MCF 10A (cell line): ENCODE measurements at regions of chr2 and their contacts with region 1.

Region 1: GRCh38 chr2:41853427-41854216 is 194.2 kb upstream of the PKDCC start:
- DNase-seq: peak; percentile 59
- H3K4me3 Mint-ChIP-seq: no peak overlapping the region
- H3K27ac Mint-ChIP-seq: no peak overlapping the region
- H3K4me1 Mint-ChIP-seq: peaks cover 2% of the 10 kb centered on the region
- H3K27me3 Mint-ChIP-seq: peaks cover 15% of the 10 kb centered on the region
- CTCF ChIP-seq: peak; percentile 67

Region 2: GRCh38 chr2:41775366-41776032 is 78.1 kb before region 1 on chr2:
- CTCF ChIA-PET with region 1: no interaction called
- POLR2A ChIA-PET with region 1: no interaction called
- intact Hi-C with region 1: no loop called
- DNase-seq: no peak
- H3K4me3 Mint-ChIP-seq: no peak overlapping the region
- H3K27ac Mint-ChIP-seq: no peak overlapping the region
- H3K4me1 Mint-ChIP-seq: no peaks in the 10 kb centered on the region
- H3K27me3 Mint-ChIP-seq: peaks cover 4% of the 10 kb centered on the region
- CTCF ChIP-seq: no peak

Region 3: DNA sequence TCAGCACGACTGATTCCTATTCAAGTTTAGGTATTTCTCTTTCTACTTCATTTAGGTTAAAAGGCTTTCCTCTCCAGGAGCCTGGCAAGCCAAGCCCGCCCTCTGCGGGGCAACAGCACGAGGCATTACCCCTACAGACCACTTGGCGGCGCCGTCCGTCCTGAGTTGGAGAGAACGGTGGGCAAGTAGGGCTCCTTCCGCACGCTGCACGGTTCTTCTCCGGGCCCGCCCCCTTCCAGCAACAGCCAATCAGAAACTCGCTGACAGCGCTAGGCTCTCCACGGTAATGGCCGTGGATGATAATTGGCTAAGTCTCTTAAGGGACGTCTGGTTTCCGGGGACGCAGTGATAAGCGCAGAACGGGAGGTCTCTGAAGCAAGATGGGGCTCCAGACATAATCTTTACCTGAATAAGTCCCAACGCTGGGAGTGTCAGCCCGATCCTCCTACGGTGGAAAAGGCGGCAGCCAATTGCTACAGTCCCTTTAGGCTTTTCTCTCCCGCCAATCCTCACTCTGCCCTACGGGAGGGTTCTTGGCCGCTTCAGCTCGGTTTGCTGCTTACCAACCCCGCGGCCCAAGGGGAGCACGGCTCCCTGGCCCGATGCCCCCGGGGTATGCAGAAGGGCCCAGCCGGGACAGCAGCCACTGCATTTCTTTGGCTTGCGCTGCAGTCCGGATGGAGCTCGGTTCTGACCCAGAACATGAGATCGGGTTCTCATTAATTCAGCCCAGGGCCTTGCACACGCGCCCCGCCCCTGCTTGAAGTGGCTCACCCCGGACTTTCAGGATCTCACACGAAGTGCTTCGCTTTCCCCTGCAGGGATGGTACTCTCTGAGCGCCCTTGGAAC is 12.7 kb before region 1 on chr2:
- CTCF ChIA-PET with region 1: interaction called, 76 read pairs
- POLR2A ChIA-PET with region 1: interaction called, 18 read pairs
- intact Hi-C with region 1: no loop called
- DNase-seq: peak; percentile 94
- H3K4me3 Mint-ChIP-seq: peak overlapping the region; percentile 89
- H3K27ac Mint-ChIP-seq: peak overlapping the region; percentile 76
- H3K4me1 Mint-ChIP-seq: peaks cover 10% of the 10 kb centered on the region
- H3K27me3 Mint-ChIP-seq: peaks cover 39% of the 10 kb centered on the region
- CTCF ChIP-seq: peak; percentile 96

Region 4: GRCh38 chr2:42072349-42073118 is 218.9 kb after region 1 on chr2:
- CTCF ChIA-PET with region 1: interaction called, 10 read pairs
- POLR2A ChIA-PET with region 1: no interaction called
- intact Hi-C with region 1: no loop called
- DNase-seq: peak; percentile 54
- H3K4me3 Mint-ChIP-seq: no peak overlapping the region
- H3K27ac Mint-ChIP-seq: no peak overlapping the region
- H3K4me1 Mint-ChIP-seq: peaks cover 12% of the 10 kb centered on the region
- H3K27me3 Mint-ChIP-seq: peaks cover 49% of the 10 kb centered on the region
- CTCF ChIP-seq: no peak